ENCODE measurements at regions of chr6 and their contacts with region 1.

Region 1: GRCh38 chr6:158819213-158819909 is at the start of gene EZR:
- DNase-seq: peak; percentile 24 to 86
- H3K4me3 ChIP-seq: peak within 1 kb of the TSS; percentile 81 to 96
- H3K27ac ChIP-seq: peak within 1 kb of the TSS; percentile 93 to 99
- H3K4me1 ChIP-seq: peaks cover 0 to 19% of the 10 kb centered on the region in 2 donors
- H3K27me3 ChIP-seq: no peaks in the 10 kb centered on the region
- CTCF ChIP-seq: peak in 1 of 3 experiments; percentile 1
- total RNA-seq, gene EZR: 49.7 TPM

Region 2: DNA sequence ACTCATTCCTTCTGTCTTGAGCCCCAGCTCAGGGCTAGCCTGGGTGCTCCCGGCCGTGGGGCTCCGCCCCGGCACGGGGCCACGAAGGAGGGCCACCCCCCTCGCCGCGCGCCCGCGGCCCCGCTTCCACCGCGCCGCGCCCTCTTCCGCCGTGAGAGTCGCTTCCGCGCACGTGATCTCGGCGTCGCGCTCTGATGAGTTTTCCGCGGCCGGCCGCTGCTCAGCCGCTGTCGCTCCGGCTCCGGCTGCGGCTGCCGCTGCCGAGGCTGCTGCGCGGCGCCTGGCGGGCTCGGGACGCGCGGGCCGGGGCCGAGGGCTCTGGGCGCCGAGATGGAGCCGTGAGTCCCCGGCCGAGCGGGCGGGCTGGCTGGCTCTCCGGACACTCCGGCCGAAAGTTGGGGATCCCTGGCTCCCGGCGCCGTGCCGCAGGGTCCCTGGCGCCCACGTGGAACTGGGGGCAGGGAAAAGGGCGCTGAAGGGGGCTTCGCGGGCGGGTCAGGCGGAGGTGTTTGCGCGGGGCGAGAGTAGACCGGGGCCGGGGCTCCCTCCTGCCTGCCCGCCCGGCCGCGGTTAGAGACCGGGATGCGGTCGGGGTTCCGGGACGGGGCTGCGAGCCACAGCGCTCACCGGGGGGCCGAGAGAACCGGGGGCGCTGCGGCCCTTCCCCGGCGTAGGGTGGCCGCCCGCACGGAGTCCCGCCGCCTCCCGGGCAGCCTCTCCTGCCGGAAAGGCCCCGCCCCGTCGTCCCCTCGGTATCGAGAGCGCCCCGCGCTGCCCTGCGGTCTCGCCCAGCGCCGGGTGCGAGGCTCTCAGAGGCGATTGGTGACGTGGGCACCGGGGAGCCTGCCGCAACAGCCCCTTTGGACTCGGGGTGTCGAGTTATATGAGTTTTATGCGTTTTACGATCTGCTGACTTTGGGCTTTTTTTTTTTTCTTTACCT is 259.2 kb before region 1 on chr6 and contains the start of gene TMEM181:
- intact Hi-C with region 1: loop called (anchors 10 kb)
- DNase-seq: peak in 1 of 2 donors; percentile 86
- H3K4me3 ChIP-seq: peak within 1 kb of the TSS; percentile 79 to 97
- H3K27ac ChIP-seq: peak within 1 kb of the TSS; percentile 91 to 93
- H3K4me1 ChIP-seq: peaks cover 7 to 10% of the 10 kb centered on the region in 2 donors
- H3K27me3 ChIP-seq: no peaks in the 10 kb centered on the region
- CTCF ChIP-seq: no peak
- total RNA-seq, gene TMEM181: 16.3 TPM

Region 3: GRCh38 chr6:158644231-158645063 is 174.9 kb before region 1 on chr6 and contains the start of gene DYNLT1:
- intact Hi-C with region 1: loop called (anchors 1 kb)
- DNase-seq: peak; percentile 76 to 97
- H3K4me3 ChIP-seq: peak within 1 kb of the TSS; percentile 86 to 90
- H3K27ac ChIP-seq: peak within 1 kb of the TSS; percentile 90 to 97
- H3K4me1 ChIP-seq: peaks cover 10 to 42% of the 10 kb centered on the region in 2 donors
- H3K27me3 ChIP-seq: no peaks in the 10 kb centered on the region
- CTCF ChIP-seq: no peak
- total RNA-seq, gene DYNLT1: 5.7 TPM

Region 4: DNA sequence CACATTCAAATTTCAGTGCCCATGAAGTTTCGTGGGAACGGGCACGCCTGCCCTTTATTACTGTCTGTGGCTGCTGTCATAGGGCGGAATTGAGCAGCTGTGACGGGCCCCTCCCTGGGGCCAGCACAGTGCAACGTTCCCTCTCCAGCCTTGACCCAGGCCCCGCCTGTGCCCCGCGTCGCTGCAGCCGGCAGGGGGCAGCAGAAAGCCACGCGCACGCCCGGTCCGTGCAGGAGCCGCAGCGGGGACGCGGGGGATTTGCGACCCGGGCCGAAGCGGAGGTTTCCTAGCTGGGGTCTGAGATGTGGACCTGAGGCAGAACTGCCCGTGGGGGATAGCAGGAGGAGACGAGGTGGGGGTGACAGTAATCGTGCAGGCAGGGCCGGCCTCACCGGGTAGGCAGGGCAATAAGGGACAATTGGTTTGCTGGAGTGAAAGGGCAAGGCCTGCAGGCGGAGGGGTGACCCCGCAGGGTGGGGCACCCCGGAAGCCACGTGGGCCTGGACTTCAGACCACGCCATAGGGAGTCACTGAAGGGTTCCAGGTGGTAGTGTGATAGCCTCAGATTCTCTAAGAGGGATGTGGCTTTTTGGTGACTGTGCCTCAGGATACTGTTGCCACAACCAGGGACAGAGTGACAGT is 115.1 kb before region 1 on chr6:
- intact Hi-C with region 1: loop called (anchors 2 kb)
- DNase-seq: peak in 1 of 2 donors; percentile 88
- H3K4me3 ChIP-seq: peak overlapping the region; percentile 45 to 61
- H3K27ac ChIP-seq: peak overlapping the region; percentile 39 to 47
- H3K4me1 ChIP-seq: peaks cover 9 to 28% of the 10 kb centered on the region in 2 donors
- H3K27me3 ChIP-seq: no peaks in the 10 kb centered on the region
- CTCF ChIP-seq: peak; percentile 94 to 100 (median 99)

Region 5: DNA sequence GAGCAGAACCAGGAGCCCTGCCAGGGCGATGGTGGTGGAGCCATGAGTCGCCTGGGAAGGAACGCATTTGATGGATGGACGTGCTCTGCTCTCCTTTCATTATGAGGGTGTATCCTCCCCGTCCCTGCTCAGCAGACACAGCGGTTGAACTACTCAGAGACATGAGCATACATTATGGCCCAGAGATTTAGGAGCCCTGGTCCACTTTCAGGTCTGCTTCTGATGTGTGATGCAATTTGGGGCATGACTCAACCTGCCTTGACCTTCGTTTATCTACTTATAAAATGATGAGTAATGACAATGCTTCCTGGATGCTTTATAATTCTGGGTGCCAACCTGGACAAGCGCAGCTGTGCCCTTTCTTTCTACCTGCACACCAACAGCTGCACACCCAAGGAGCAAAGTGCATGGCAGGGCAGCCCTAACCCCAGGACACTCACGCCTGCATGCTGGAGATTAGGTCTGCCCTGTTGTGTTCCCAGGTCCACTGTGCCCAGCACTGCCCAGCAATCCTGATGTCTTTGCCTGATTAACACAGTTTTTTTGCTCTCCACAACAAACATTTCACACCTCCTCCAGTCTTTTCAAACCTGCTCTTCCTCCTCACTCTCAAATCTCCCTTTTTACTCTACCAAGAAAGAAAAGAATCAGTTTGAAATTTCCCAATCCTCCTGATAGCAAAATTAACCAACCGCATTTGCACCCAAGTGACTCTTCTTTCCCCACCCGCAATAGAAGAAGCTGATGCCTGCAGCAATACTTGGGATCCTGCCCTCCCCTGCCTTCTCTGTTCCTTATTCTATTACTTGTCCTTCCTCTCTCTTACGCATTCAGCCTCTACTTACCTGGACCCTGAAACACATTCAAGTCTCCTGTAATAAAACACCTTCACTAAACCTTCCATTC is 81.4 kb before region 1 on chr6:
- intact Hi-C with region 1: no loop called
- DNase-seq: no peak
- H3K4me3 ChIP-seq: no peak overlapping the region
- H3K27ac ChIP-seq: no peak overlapping the region
- H3K4me1 ChIP-seq: no peaks in the 10 kb centered on the region
- H3K27me3 ChIP-seq: no peaks in the 10 kb centered on the region
- CTCF ChIP-seq: no peak

Region 6: DNA sequence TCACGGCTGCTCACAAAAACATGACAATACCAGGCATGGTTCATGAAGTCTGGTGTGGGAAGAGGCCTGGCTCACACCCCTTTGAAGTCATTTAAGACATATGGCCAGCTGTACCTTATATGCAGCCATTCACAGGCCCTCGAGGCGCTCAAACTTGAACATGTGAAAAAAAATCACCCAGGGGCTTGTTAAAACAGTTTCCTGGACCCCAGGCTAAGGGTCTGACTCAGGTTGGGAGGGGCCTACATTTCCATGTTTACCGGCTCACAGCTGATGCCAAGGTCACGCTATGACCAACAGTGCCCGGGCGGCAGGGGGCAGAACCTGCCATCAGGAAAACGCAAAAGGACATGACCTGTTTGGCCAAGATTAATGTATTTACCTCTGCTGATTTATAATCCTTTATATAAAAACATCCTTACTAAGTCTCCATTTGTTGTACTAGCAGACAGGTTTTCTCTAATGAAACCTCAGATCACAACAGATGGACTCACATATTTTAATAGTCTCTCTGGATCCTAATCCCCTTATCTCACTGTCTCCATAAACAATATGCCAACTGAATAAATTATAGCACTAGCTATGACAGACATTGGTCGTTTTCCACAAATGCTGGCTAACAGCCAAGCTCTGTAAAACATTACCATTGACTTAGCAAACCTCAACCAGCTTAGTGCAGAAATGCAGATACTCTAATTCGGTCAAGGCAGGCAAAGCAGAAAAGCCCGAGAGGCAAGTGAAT is 20.1 kb before region 1 on chr6:
- intact Hi-C with region 1: loop called (anchors 2 kb)
- DNase-seq: no peak
- H3K4me3 ChIP-seq: no peak overlapping the region
- H3K27ac ChIP-seq: peak overlapping the region; percentile 39 to 65
- H3K4me1 ChIP-seq: peaks cover 5 to 19% of the 10 kb centered on the region in 2 donors
- H3K27me3 ChIP-seq: no peaks in the 10 kb centered on the region
- CTCF ChIP-seq: peak in 1 of 3 experiments; percentile 12

Region 7: GRCh38 chr6:158869826-158870648 is 50.7 kb after region 1 on chr6:
- intact Hi-C with region 1: loop called (anchors 1 kb)
- DNase-seq: peak; percentile 72 to 90
- H3K4me3 ChIP-seq: peak overlapping the region; percentile 52 to 59
- H3K27ac ChIP-seq: peak overlapping the region; percentile 47 to 55
- H3K4me1 ChIP-seq: no peaks in the 10 kb centered on the region
- H3K27me3 ChIP-seq: no peaks in the 10 kb centered on the region
- CTCF ChIP-seq: no peak

Region 8: DNA sequence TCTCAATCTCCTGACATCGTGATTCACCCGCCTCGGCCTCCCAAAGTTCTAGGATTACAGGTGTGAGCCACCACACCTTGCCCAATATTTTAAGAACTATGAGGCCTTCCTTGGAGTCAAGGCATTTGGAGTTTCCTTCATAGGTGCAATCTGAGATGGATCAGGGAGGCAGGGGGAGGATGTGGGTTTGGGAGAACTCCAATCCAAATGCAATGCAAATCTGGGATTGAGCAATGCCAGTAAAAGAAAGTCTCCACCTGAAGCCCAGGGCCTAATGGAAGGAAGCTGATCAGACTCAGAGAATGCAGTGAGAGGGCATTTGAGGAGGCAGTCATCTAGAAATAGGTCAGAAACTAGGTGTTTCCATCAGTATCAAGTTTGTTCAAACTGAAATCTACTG is 159.4 kb after region 1 on chr6:
- intact Hi-C with region 1: no loop called
- DNase-seq: no peak
- H3K4me3 ChIP-seq: no peak overlapping the region
- H3K27ac ChIP-seq: no peak overlapping the region
- H3K4me1 ChIP-seq: no peaks in the 10 kb centered on the region
- H3K27me3 ChIP-seq: no peaks in the 10 kb centered on the region
- CTCF ChIP-seq: no peak

Region 9: GRCh38 chr6:158999666-159000403 is 180.5 kb after region 1 on chr6 and contains the start of gene RSPH3:
- intact Hi-C with region 1: loop called (anchors 5 kb)
- DNase-seq: peak; percentile 51 to 94
- H3K4me3 ChIP-seq: peak within 1 kb of the TSS; percentile 66 to 83
- H3K27ac ChIP-seq: peak within 1 kb of the TSS; percentile 57 to 61
- H3K4me1 ChIP-seq: peaks cover 0 to 2% of the 10 kb centered on the region in 2 donors
- H3K27me3 ChIP-seq: no peaks in the 10 kb centered on the region
- CTCF ChIP-seq: peak in 1 of 3 experiments; percentile 29
- total RNA-seq, gene RSPH3: 8.8 TPM

Region 10: DNA sequence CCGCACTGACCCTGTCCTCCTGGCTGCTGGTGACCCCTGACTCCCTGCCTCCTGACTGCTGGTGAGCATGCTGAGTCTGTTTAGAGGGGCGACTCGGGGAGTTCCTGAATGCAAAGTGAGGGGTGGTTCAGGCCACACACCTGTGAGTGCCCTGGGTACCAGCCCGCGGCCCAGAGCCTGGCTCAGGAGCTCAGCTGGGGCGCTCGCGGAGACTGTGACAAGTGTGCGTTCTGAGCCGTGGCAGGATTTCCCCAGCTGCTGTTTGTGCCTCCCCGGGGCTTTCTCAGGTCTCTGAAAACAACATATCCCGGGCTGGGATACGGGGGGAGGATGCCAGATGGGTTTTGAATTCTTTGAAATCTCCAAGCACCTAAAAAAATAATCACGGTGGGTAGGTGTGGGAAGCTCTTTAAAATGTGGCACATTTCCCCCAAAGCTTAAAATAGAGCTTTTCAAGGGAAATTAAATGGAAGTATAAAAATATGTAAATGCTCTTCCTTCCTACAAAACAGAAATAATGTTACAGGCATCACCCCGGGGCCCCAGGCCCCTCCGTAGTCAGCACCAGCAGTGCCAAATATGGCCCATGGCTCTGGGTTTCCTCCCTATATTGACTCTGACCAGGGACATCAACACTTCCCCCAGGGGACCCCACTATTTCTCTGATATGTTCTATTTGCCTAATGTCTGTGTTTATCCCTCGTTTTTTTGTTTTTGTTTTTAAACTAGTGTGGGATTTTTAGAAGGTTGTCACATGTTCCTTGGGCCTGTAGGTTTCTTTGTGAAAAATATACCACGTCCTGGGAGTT is 275.3 kb after region 1 on chr6:
- intact Hi-C with region 1: no loop called
- DNase-seq: no peak
- H3K4me3 ChIP-seq: no peak overlapping the region
- H3K27ac ChIP-seq: no peak overlapping the region
- H3K4me1 ChIP-seq: no peaks in the 10 kb centered on the region
- H3K27me3 ChIP-seq: no peaks in the 10 kb centered on the region
- CTCF ChIP-seq: no peak

Region 11: GRCh38 chr6:159116343-159116742 is 297.0 kb after region 1 on chr6:
- intact Hi-C with region 1: no loop called
- DNase-seq: no peak
- H3K4me3 ChIP-seq: no peak overlapping the region
- H3K27ac ChIP-seq: no peak overlapping the region
- H3K4me1 ChIP-seq: no peaks in the 10 kb centered on the region
- H3K27me3 ChIP-seq: no peaks in the 10 kb centered on the region
- CTCF ChIP-seq: no peak

Measured in ascending aorta (tissue), 2 donors.